Activated CD8-positive, alpha-beta T cell treated with anti-CD3 and anti-CD28 coated beads for 36 hours (primary cell): ENCODE measurements at regions of chr6 and their contacts with region 1.

Region 1: DNA sequence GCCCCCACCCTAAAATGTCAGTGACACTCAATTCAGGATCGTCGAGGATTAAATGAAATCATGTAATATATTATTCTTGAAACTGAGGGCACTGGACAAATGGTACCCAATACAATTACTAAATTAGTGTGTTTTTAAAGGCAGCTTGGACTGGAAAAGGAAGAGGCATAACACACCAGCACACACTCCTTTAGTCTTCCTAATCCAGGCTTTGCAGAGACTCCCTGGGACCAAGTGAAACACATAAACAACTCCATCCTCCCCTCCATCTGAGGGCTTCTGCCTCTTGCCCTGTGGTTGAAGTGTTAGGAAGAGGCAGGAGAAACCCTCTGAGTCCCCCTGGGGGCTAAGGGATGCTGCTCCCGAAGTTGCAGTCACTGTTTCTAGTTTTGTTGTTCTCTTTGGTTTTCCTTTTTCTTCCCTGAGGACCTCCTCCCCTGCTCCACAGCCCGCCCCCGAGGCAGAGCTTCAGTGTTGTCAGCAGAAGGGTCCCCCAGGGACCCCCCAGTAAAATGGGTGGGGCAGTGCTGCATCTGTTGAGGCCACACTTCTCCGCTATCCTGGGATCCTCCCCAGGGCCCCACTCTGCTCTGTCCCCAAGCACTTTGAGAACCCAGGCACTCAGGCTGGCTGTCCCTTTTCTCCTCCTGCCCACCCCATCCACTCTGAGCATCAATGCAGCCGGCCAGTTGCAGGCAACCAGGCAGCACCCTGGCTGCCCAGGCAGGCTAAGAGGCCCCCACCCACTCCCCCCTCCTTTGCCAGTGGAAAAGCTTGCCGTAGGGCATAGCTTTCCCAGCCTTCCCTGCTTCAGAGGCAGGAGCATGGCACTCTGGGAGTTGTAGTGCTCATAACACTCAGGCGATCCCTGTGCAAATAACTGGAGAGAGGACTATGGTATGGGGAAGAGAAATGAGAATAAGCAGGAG is 5.9 kb downstream of the TMEM63B start:
- DNase-seq: no peak
- ATAC-seq: no peak
- H3K4me3 Mint-ChIP-seq: no peak overlapping the region
- H3K27ac Mint-ChIP-seq: no peak overlapping the region
- H3K4me1 Mint-ChIP-seq: peaks cover 5% of the 10 kb centered on the region
- H3K27me3 Mint-ChIP-seq: no peaks in the 10 kb centered on the region
- CTCF ChIP-seq: no peak

Region 2: GRCh38 chr6:44010411-44011349 is 122.6 kb before region 1 on chr6:
- CTCF ChIA-PET with region 1: no interaction called
- POLR2A ChIA-PET with region 1: no interaction called
- intact Hi-C with region 1: no loop called
- DNase-seq: peak; percentile 34
- ATAC-seq: peak; percentile 53
- H3K4me3 Mint-ChIP-seq: no peak overlapping the region
- H3K27ac Mint-ChIP-seq: no peak overlapping the region
- H3K4me1 Mint-ChIP-seq: no peaks in the 10 kb centered on the region
- H3K27me3 Mint-ChIP-seq: peaks cover 13% of the 10 kb centered on the region
- CTCF ChIP-seq: no peak

Region 3: DNA sequence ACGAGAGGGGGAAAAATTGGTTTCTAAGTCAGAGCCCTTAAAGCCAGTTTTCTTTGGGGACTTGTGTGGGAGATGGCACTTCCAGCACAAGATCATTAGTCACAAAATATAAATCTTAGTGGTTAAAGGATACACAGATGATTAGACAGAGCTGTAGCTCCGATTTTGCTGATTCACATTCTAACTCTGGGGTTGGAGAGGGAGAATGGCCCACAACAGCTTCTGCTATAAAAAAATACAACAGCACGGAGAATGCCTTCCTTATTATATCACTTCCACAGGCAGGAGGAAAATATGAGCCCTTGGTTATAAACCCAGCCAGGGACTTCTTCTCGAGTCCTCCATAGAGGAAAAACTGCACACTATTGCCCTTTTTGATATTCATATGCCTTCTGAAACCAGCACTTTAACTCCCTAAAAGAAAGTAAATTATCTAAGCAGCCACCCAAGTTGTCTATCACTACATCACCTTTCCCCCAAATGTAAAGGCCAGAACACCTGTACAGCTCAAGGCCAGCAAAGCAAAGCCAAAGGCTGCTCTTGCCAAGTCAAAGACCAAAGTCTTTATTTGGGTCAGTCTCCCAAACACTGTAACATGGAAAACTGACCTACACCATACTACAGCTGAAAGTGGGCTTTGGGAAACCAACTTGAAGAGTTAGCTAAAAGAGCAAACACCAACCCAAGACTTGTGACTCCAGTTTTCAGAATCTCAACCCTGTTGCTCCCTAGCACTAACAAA is 16.5 kb before region 1 on chr6:
- CTCF ChIA-PET with region 1: interaction called, 4 read pairs
- POLR2A ChIA-PET with region 1: interaction called, 21 read pairs
- intact Hi-C with region 1: no loop called
- DNase-seq: no peak
- ATAC-seq: no peak
- H3K4me3 Mint-ChIP-seq: no peak overlapping the region
- H3K27ac Mint-ChIP-seq: peak overlapping the region; percentile 37
- H3K4me1 Mint-ChIP-seq: peaks cover 42% of the 10 kb centered on the region
- H3K27me3 Mint-ChIP-seq: no peaks in the 10 kb centered on the region
- CTCF ChIP-seq: no peak